Breast epithelium (tissue), 4 donors: ENCODE measurements at regions of chr18 and their contacts with region 1.

Region 1: GRCh38 chr18:9102508-9103375 is at the start of gene NDUFV2:
- DNase-seq: peak; percentile 94 to 97
- H3K4me3 ChIP-seq: peak within 1 kb of the TSS; percentile 60 to 77 (median 72)
- H3K27ac ChIP-seq: peak within 1 kb of the TSS; percentile 93 to 96
- H3K4me1 ChIP-seq: peaks cover 11 to 22% of the 10 kb centered on the region in 2 donors
- H3K27me3 ChIP-seq: no peaks in the 10 kb centered on the region
- CTCF ChIP-seq: peak in 1 of 3 donors; percentile 12
- POLR2A ChIP-seq: peak; percentile 90
- total RNA-seq, gene NDUFV2: 106 to 116 (median 113) TPM

Region 2: GRCh38 chr18:9136315-9137155 is 33.8 kb after region 1 on chr18 and contains the start of gene ANKRD12:
- intact Hi-C with region 1: loop called (anchors 2 kb)
- DNase-seq: peak; percentile 98
- H3K4me3 ChIP-seq: peak within 1 kb of the TSS; percentile 84 to 92 (median 88)
- H3K27ac ChIP-seq: peak within 1 kb of the TSS; percentile 98 to 100
- H3K4me1 ChIP-seq: peaks cover 9 to 18% of the 10 kb centered on the region in 2 donors
- H3K27me3 ChIP-seq: no peaks in the 10 kb centered on the region
- CTCF ChIP-seq: peak in 1 of 3 donors; percentile 11
- POLR2A ChIP-seq: peak; percentile 88
- total RNA-seq, gene ANKRD12: 47.7 to 66.9 (median 51.5) TPM

Region 3: GRCh38 chr18:10230072-10230471 is 1127.3 kb after region 1 on chr18:
- intact Hi-C with region 1: no loop called
- DNase-seq: no peak
- H3K4me3 ChIP-seq: no peak overlapping the region
- H3K27ac ChIP-seq: no peak overlapping the region
- H3K4me1 ChIP-seq: no peaks in the 10 kb centered on the region
- H3K27me3 ChIP-seq: no peaks in the 10 kb centered on the region
- CTCF ChIP-seq: no peak
- POLR2A ChIP-seq: no peak